Keratinocyte (primary cell): ENCODE measurements at regions of chr10 and their contacts with region 1.

Region 1: DNA sequence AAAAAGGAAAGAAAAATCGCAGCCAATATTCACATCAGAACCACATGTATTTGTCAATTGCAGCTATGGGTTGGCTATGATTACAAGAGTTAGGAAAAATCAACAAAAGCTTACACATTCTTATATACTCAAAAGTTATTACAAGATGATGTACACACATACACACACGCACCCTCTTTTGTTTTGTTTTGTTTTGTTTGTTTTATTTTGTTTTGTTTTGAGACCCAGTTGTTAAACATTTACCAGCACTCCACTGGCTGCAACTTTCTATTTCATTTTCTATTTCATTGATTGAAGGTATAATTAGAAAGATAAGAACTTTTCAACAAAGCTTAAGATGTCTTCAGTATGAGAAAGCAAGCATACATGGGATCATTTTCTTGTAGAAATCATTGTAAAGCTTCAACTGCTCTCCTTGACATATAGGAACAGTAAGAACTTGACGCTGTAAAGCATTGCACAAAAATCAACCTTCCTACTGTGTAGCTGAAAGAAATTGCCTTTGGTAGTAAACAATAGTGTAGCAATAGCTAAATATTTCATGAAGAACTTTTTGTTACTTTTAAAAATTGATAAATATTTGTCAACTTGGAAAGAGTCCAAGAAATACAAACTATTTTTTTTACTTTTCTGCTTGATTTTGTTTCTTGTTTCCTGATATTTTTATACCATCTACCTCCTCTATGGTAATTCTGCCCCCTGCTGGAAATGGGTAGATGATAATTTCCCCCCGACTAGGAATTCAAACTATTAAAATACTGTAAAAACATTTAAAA is 205.9 kb downstream of the MBL2 start:
- DNase-seq: no peak
- H3K4me3 ChIP-seq: peak overlapping the region in 1 of 3 experiments; percentile 14
- H3K27ac ChIP-seq: no peak overlapping the region
- H3K4me1 ChIP-seq: peaks cover 5% of the 10 kb centered on the region
- H3K27me3 ChIP-seq: no peaks in the 10 kb centered on the region
- CTCF ChIP-seq: peak in 2 of 3 experiments; percentile 22 to 40

Region 2: GRCh38 chr10:52308251-52309031 is 258.2 kb before region 1 on chr10:
- dilution Hi-C with region 1: loop called (anchors 25 kb)
- DNase-seq: no peak
- H3K4me3 ChIP-seq: peak overlapping the region; percentile 9 to 80 (median 66)
- H3K27ac ChIP-seq: no peak overlapping the region
- H3K4me1 ChIP-seq: peaks cover 16% of the 10 kb centered on the region
- H3K27me3 ChIP-seq: no peaks in the 10 kb centered on the region
- CTCF ChIP-seq: peak; percentile 64 to 72 (median 64)